Left ventricle myocardium inferior (tissue), 1 donor: ENCODE measurements at regions of chr3 and their contacts with region 1.

Region 1: GRCh38 chr3:111351334-111351733 is 190.7 kb upstream of the CD96 start:
- DNase-seq: no peak
- H3K4me3 ChIP-seq: no peak overlapping the region
- H3K27ac ChIP-seq: no peak overlapping the region
- H3K4me1 ChIP-seq: no peaks in the 10 kb centered on the region
- H3K27me3 ChIP-seq: no peaks in the 10 kb centered on the region
- CTCF ChIP-seq: no peak

Region 2: DNA sequence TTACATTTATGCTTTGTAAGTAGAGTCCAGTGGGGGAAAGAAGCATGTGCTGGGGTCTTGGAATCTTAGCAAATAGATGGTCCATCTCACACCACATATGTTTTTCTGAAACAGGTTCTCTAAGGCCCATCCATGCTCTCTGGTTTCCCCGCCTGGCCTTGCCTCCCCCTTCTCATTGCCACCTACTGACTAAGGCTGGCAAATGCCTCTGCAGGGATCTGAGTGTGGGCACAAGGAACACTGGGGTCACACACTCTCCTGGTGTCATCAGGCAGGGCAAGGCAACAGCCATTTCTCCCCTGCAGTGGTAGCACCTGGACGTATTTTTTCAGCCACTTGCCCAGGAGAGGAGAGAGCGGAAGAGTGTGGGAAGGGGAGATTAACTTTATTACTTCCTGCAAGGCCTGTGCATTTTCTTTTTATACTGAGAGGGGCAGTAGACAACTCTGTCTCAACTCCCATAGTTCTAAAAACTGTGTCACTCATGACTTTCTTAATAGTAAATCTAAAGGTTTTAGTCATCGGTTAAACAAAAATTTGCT is 1084.0 kb before region 1 on chr3:
- intact Hi-C with region 1: no loop called
- DNase-seq: no peak
- H3K4me3 ChIP-seq: no peak overlapping the region
- H3K27ac ChIP-seq: no peak overlapping the region
- H3K4me1 ChIP-seq: no peaks in the 10 kb centered on the region
- H3K27me3 ChIP-seq: no peaks in the 10 kb centered on the region
- CTCF ChIP-seq: no peak

Region 3: GRCh38 chr3:111408011-111408410 is 56.7 kb after region 1 on chr3:
- intact Hi-C with region 1: loop called (anchors 2 kb)
- DNase-seq: no peak
- H3K4me3 ChIP-seq: no peak overlapping the region
- H3K27ac ChIP-seq: no peak overlapping the region
- H3K4me1 ChIP-seq: no peaks in the 10 kb centered on the region
- H3K27me3 ChIP-seq: no peaks in the 10 kb centered on the region
- CTCF ChIP-seq: no peak